ENCODE measurements at regions of chr21 and their contacts with region 1.

Region 1: GRCh38 chr21:42973991-42974831 is at the start of gene PKNOX1:
- DNase-seq: peak; percentile 99
- H3K4me3 Mint-ChIP-seq: peak within 1 kb of the TSS; percentile 87
- H3K27ac Mint-ChIP-seq: peak within 1 kb of the TSS; percentile 95
- H3K4me1 Mint-ChIP-seq: peaks cover 29% of the 10 kb centered on the region
- H3K27me3 Mint-ChIP-seq: no peaks in the 10 kb centered on the region
- total RNA-seq, gene PKNOX1: 16.9 to 18.0 TPM

Region 2: GRCh38 chr21:42496122-42496900 is 477.9 kb before region 1 on chr21 and contains the start of gene RSPH1:
- CTCF ChIA-PET with region 1: no interaction called
- POLR2A ChIA-PET with region 1: no interaction called
- intact Hi-C with region 1: loop called (anchors 1 kb)
- DNase-seq: peak; percentile 100
- H3K4me3 Mint-ChIP-seq: peak within 1 kb of the TSS; percentile 90
- H3K27ac Mint-ChIP-seq: peak within 1 kb of the TSS; percentile 67
- H3K4me1 Mint-ChIP-seq: peaks cover 21% of the 10 kb centered on the region
- H3K27me3 Mint-ChIP-seq: peaks cover 1% of the 10 kb centered on the region
- total RNA-seq, gene RSPH1: 0.38 to 0.53 TPM

Region 3: GRCh38 chr21:42878993-42879787 is 95.0 kb before region 1 on chr21 and contains the start of gene WDR4:
- CTCF ChIA-PET with region 1: no interaction called
- POLR2A ChIA-PET with region 1: interaction called, 3 read pairs
- intact Hi-C with region 1: loop called (anchors 2 kb)
- DNase-seq: peak; percentile 100
- H3K4me3 Mint-ChIP-seq: peak within 1 kb of the TSS; percentile 99
- H3K27ac Mint-ChIP-seq: peak within 1 kb of the TSS; percentile 98
- H3K4me1 Mint-ChIP-seq: peaks cover 32% of the 10 kb centered on the region
- H3K27me3 Mint-ChIP-seq: no peaks in the 10 kb centered on the region
- total RNA-seq, gene WDR4: 39.8 to 39.9 TPM

Region 4: DNA sequence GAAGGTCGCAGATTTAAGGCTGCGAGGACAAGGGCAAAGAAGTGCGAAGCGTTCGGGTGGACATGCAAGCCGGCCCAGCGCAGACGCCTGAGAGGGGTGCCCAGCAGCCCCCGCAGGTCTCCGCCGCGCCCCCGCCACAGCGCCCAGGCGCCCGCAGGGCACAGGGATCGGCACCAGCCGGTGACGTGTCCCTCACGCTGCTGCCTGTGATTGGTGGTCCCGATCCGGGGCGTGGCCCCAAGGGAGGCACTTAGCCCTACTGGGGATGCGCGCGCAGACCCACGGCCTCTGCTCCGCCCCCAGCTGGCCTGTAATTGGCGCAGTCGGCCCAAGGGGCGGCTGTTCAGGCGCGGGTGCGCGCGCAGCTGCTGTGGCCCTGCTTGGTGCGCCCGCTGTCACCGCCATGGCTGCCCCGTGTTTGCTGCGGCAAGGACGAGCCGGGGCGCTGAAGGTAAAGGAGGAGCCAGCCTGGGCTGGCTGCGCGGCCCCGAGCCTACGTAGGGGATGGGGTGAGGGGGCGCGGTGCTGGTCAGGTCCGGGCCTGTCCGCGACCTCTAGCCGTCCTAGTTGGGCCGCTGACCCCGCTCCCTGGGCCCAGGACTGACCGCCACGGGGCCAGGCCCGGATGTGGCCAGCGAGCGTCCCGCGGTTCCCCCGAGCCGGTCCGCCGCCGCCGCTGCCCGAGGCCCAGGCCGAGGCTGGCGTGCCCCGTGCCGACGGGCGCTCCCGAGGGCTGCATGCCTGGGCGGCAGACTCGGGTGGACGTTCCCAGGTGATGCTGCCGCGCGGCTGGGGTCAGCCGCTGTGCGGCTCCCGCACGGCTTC is 81.1 kb before region 1 on chr21 and contains the start of gene NDUFV3:
- CTCF ChIA-PET with region 1: no interaction called
- POLR2A ChIA-PET with region 1: interaction called, 9 read pairs
- intact Hi-C with region 1: loop called (anchors 1 kb)
- DNase-seq: peak; percentile 100
- H3K4me3 Mint-ChIP-seq: peak within 1 kb of the TSS; percentile 87
- H3K27ac Mint-ChIP-seq: peak within 1 kb of the TSS; percentile 89
- H3K4me1 Mint-ChIP-seq: peaks cover 13% of the 10 kb centered on the region
- H3K27me3 Mint-ChIP-seq: no peaks in the 10 kb centered on the region
- total RNA-seq, gene NDUFV3: 16.1 to 17.3 TPM